Transverse colon (tissue), 4 donors: ENCODE measurements at regions of chr19 and their contacts with region 1.

Region 1: DNA sequence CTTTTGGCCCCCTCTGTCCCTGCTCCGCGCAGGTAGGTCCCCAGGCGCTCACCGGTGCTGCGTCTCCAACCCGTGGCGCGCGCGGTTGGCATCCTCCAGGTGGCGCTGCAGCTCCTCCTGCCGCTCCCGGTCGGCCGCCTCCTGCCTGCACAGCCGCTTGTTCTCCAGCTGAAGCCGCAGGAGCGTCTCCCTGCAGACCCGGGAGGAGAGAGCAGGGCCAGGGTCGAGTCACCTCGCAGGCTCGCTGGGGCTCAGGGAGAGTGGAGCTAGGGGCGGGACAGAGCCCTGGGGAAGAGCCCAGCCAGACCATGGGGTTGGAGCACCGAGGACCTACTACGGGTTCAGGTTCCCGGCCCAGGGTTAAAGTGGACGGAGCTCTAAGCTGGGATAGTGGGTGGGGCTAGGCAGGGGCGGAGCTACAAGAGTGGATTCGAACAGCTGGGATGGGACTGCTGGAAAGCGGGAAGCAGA is 9.3 kb downstream of the HOOK2 start:
- DNase-seq: peak; percentile 93
- H3K4me3 ChIP-seq: peak overlapping the region in 3 of 4 donors; percentile 21 to 41 (median 38)
- H3K27ac ChIP-seq: peak overlapping the region; percentile 39 to 88 (median 80)
- H3K4me1 ChIP-seq: peaks cover 0 to 15% (median 4%) of the 10 kb centered on the region in 4 donors
- H3K27me3 ChIP-seq: no peaks in the 10 kb centered on the region
- CTCF ChIP-seq: peak; percentile 74 to 96 (median 77)
- EP300 ChIP-seq: no peak
- POLR2A ChIP-seq: peak; percentile 19

Region 2: GRCh38 chr19:12425236-12425887 is 340.7 kb before region 1 on chr19:
- in situ Hi-C with region 1: no loop called
- intact Hi-C with region 1: no loop called
- DNase-seq: no peak
- H3K4me3 ChIP-seq: no peak overlapping the region
- H3K27ac ChIP-seq: no peak overlapping the region
- H3K4me1 ChIP-seq: no peaks in the 10 kb centered on the region
- H3K27me3 ChIP-seq: no peaks in the 10 kb centered on the region
- CTCF ChIP-seq: no peak
- EP300 ChIP-seq: no peak
- POLR2A ChIP-seq: no peak

Region 3: GRCh38 chr19:12543855-12544254 is 222.2 kb before region 1 on chr19:
- in situ Hi-C with region 1: no loop called
- intact Hi-C with region 1: no loop called
- DNase-seq: no peak
- H3K4me3 ChIP-seq: no peak overlapping the region
- H3K27ac ChIP-seq: no peak overlapping the region
- H3K4me1 ChIP-seq: peaks cover 0 to 4% (median under 1%) of the 10 kb centered on the region in 4 donors
- H3K27me3 ChIP-seq: no peaks in the 10 kb centered on the region
- CTCF ChIP-seq: no peak
- EP300 ChIP-seq: no peak
- POLR2A ChIP-seq: no peak

Region 4: DNA sequence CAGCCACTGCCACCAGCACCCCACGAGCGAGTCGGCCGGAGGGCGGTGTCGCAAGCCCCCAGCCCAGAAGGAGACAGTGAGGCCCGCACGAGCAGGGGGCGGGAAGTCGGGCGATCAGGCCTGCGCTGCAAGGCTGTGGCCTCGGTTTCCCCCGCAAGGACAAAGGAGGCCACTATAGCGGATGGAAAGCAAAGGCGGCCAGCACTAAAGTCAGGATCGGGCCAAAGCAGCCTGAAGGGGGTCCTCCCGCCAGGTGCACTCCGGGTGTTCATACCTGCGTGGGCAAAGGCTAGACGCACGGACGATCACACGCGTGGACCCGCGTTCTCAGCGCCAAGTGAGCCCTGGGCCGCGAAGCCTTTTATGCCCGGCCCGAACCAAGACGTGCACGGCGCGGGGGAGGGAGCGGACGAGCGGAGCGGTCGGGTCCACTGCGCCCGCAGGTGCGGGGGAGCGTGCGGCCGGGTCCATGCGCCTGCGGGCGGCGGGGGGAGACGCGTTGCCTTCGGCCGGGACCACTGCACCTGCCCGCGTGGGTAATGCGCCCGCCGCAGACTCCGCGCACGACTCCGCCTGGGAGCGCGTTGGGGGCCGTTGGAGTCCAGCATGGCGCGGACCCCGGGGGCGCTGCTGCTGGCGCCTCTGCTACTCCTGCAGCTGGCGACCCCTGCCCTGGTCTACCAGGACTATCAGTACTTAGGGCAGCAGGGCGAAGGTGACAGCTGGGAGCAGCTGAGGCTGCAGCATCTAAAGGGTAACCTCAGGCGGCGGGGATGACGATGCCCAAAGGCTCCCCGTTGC is 35.6 kb after region 1 on chr19 and contains the starts of genes PRDX2 and THSD8:
- in situ Hi-C with region 1: no loop called
- intact Hi-C with region 1: loop called (anchors 5 kb)
- DNase-seq: peak; percentile 90
- H3K4me3 ChIP-seq: peak within 1 kb of the TSS; percentile 36 to 84 (median 75)
- H3K27ac ChIP-seq: peak within 1 kb of the TSS; percentile 80 to 88 (median 84)
- H3K4me1 ChIP-seq: peaks cover 9 to 26% (median 20%) of the 10 kb centered on the region in 4 donors
- H3K27me3 ChIP-seq: no peaks in the 10 kb centered on the region
- CTCF ChIP-seq: peak in 2 of 5 experiments; percentile 16 to 34
- EP300 ChIP-seq: no peak
- POLR2A ChIP-seq: peak; percentile 98
- total RNA-seq, gene PRDX2: 172 to 357 (median 198) TPM
- total RNA-seq, gene THSD8: 1.6 TPM in 1 of 4 donors, not detected in the others

Region 5: GRCh38 chr19:12840091-12841079 is 74.3 kb after region 1 on chr19:
- in situ Hi-C with region 1: loop called in 3 of 4 experiments (anchors 5 to 10 kb)
- intact Hi-C with region 1: loop called (anchors 5 kb)
- DNase-seq: peak; percentile 84
- H3K4me3 ChIP-seq: peak overlapping the region in 2 of 4 donors; percentile 8 to 24
- H3K27ac ChIP-seq: no peak overlapping the region
- H3K4me1 ChIP-seq: peaks cover 8 to 26% (median 22%) of the 10 kb centered on the region in 4 donors
- H3K27me3 ChIP-seq: peaks cover 98% of the 10 kb centered on the region
- CTCF ChIP-seq: no peak
- EP300 ChIP-seq: no peak
- POLR2A ChIP-seq: no peak

Region 6: GRCh38 chr19:12847159-12848139 is 81.4 kb after region 1 on chr19:
- in situ Hi-C with region 1: loop called in 3 of 4 experiments (anchors 5 to 10 kb)
- intact Hi-C with region 1: loop called (anchors 5 kb)
- DNase-seq: peak; percentile 88
- H3K4me3 ChIP-seq: peak overlapping the region in 1 of 4 donors; percentile 28
- H3K27ac ChIP-seq: no peak overlapping the region
- H3K4me1 ChIP-seq: peaks cover 0 to 10% (median 9%) of the 10 kb centered on the region in 4 donors
- H3K27me3 ChIP-seq: peaks cover 60% of the 10 kb centered on the region
- CTCF ChIP-seq: peak; percentile 94 to 100 (median 99)
- EP300 ChIP-seq: no peak
- POLR2A ChIP-seq: no peak

Region 7: GRCh38 chr19:13122275-13122878 is 356.3 kb after region 1 on chr19:
- in situ Hi-C with region 1: no loop called
- intact Hi-C with region 1: no loop called
- DNase-seq: no peak
- H3K4me3 ChIP-seq: no peak overlapping the region
- H3K27ac ChIP-seq: no peak overlapping the region
- H3K4me1 ChIP-seq: peaks cover 6 to 24% (median 19%) of the 10 kb centered on the region in 4 donors
- H3K27me3 ChIP-seq: no peaks in the 10 kb centered on the region
- CTCF ChIP-seq: no peak
- EP300 ChIP-seq: no peak
- POLR2A ChIP-seq: no peak